ENCODE measurements at regions of chr22 and their contacts with region 1.

Region 1: DNA sequence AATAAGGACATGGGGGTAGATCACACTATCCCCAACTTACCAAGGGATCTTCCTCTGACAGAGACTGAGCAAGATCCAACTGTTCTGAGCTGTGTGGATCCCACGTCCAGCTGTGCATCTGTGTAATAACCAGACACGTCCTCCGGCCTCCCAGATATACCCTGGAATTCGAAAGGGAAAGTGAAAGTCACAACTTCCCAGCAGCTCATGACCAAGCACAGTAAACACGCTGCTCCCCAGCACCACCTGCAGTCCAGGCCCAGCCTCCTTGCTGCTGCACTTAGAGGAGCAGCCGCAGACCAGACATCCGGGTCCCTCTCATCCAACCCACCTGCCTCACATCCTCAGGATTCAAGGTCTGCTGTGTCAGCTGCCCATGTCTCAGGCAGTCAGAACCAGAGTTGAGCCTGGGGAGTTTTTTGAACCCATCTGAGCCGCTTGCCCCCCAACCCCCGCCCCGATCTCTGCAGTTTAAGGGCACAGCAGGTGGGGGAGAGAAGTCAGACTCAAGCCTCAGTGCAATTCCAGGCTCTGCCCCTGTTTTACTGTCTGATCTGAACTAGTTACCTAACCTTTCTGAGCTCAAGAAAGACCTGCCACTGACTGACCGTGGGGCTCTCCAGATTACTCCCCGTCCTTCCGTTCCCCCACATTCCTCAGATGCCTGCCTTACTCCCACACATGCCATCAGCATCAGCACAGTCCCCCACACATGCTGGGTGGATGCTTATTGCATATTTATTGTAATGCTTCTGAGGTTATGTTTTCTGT is at the start of gene APOL2:
- DNase-seq: peak; percentile 88 to 96 (median 96)
- H3K4me3 ChIP-seq: peak within 1 kb of the TSS; percentile 79 to 99 (median 89)
- H3K27ac ChIP-seq: peak within 1 kb of the TSS; percentile 67 to 93
- H3K4me1 ChIP-seq: peaks cover 9 to 32% (median 22%) of the 10 kb centered on the region in 4 experiments
- H3K27me3 ChIP-seq: no peaks in the 10 kb centered on the region

Region 2: DNA sequence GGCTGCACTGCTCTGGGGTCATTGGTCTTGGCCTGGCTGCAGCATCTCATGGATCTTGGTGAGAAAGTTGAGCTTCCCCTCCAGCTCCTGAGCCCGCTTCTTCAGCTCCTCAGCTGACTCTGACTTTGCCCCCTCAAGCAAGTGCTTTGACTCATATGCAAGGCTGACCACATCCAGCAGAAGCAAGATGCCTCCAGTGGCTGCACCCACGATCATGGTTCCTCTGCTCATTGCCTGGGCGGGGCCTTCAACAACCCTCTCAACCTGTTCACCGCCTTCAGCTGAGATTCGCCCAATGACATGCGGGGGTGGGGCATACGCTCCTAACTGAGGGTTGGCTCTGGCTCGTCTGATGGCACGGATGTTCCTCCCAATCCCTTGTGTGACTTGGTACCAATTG is 12.2 kb before region 1 on chr22:
- CTCF ChIA-PET with region 1: interaction called, 29 read pairs
- POLR2A ChIA-PET with region 1: no interaction called
- DNase-seq: no peak
- H3K4me3 ChIP-seq: no peak overlapping the region
- H3K27ac ChIP-seq: no peak overlapping the region
- H3K4me1 ChIP-seq: no peaks in the 10 kb centered on the region
- H3K27me3 ChIP-seq: no peaks in the 10 kb centered on the region

Region 3: DNA sequence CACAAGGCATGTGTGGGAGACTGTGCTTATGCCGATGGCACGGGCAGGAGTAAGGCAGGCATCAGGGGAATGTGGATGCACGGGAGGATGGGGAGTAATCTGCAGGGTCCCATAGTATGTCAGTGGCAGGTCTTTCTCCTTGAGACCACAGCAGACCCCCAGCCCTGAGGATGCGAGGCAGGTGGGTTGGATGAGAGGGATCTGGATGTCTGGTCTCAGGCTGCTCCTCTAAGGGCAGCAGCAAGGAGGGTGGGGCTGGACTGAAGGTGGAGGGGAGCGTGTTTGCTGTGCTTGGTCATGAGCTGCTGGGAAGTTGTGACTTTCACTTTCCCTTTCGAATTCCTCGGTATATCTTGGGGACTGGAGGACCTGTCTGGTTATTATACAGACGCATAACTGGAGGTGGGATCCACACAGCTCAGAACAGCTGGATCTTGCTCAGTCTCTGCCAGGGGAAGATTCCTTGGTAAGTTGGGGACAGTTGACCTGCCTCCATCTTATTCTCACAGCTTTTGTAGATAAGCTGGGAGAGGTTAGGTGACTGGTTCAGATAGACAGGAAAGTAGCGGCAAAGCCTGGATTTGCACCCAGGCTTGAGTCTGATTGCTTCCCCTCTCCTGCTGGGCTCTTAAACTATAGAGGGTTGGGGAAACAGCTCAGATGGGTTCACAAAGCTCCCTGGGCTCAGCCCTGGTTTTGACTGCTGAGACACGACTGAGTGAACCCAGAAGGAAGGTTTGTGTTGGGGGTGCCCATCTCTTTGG is 13.3 kb after region 1 on chr22 and contains the start of gene APOL1:
- CTCF ChIA-PET with region 1: interaction called, 20 read pairs
- POLR2A ChIA-PET with region 1: interaction called, 3 read pairs
- DNase-seq: peak; percentile 61 to 87 (median 78)
- H3K4me3 ChIP-seq: peak within 1 kb of the TSS; percentile 51 to 97 (median 81)
- H3K27ac ChIP-seq: peak within 1 kb of the TSS; percentile 62 to 86
- H3K4me1 ChIP-seq: peaks cover 0 to 27% (median 25%) of the 10 kb centered on the region in 4 experiments
- H3K27me3 ChIP-seq: no peaks in the 10 kb centered on the region

Region 4: DNA sequence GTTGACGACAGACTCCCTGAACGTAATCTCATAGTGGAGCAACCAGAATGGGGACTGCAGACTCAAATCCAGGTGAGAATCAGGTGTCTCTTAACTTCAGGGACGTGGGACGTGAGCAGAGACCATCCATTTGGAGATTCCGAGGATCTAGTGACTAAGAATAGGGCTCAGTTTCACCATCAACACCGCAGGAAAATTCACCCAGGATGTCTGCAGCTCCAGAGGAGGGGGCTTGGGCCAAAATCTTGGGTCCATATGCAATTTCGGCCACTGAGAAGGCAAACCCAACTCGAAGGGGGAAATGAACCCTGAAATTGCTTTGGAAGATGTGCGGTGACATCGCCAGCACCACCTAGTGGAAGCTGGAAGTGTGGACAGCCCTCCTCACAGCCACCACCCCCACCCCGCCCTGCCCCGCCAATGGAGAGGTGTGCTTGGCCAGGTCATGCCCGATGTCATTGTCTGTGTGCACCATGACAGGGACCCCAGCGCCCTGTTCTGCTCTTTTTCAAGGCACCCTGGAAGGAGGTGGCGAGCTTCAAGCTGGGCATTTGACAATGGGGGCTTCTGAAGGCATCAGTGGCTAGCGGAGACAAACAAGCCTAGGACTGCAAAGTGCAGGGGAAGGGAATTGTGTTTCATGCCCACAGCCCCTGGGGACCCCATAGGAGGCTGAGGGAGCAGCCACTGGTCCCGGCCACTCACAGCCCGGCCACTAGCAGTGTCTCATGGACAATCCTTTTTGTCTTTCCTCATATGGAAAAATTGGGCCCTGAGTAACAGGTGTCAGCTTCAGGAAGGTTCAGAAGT is 38.1 kb after region 1 on chr22:
- CTCF ChIA-PET with region 1: interaction called, 11 read pairs
- POLR2A ChIA-PET with region 1: no interaction called
- DNase-seq: peak; percentile 62 to 81 (median 75)
- H3K4me3 ChIP-seq: peak overlapping the region in 1 of 7 experiments; percentile 8
- H3K27ac ChIP-seq: no peak overlapping the region
- H3K4me1 ChIP-seq: peaks cover 0 to 11% (median 6%) of the 10 kb centered on the region in 4 experiments
- H3K27me3 ChIP-seq: no peaks in the 10 kb centered on the region

Measured in common myeloid progenitor, CD34-positive (primary cell).